Calu3 (cell line): ENCODE measurements at regions of chr2 and their contacts with region 1.

Region 1: DNA sequence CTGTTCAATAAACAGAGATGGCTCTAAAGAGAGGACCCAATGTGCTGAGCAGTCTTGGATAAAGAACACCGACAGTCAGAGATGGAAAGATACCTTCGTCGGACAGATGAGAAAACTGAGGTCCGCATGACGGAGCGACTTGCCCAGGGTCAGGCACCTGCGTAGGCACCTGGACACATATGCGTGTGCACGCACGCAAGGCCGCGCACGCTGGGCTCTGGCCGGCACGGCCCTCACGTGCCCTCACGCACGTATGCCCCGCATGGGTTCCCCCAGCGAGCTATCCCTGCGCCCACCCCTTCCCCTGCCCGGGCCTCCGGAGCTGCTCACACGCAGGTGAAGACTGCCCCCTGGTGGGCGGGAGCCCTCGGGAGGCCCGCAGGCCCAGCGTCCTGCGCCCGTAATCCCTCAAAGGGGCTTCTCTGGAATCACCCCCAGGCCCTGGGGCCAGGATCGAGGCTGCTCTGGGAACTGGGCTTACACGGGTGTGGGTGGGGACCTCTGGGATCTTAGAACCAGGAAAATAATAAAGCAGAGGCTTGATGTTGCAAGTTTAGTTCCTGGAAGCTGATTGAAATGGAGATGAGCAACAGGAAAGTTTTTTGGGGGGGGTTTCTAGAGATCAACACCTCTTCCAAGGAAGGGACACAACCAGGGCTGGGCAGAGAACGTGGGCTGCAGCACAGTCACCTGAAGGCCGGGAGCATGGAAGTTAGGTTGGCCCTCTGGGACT is 246.3 kb downstream of the TNS1 start:
- DNase-seq: peak; percentile 84
- H3K4me3 Mint-ChIP-seq: no peak overlapping the region
- H3K27ac Mint-ChIP-seq: no peak overlapping the region
- H3K4me1 Mint-ChIP-seq: no peaks in the 10 kb centered on the region
- H3K27me3 Mint-ChIP-seq: peaks cover 19% of the 10 kb centered on the region
- CTCF ChIP-seq: peak; percentile 93

Region 2: GRCh38 chr2:216687646-216688045 is 1068.9 kb before region 1 on chr2:
- CTCF ChIA-PET with region 1: no interaction called
- intact Hi-C with region 1: loop called (anchors 2 kb)
- DNase-seq: peak; percentile 35
- H3K4me3 Mint-ChIP-seq: no peak overlapping the region
- H3K27ac Mint-ChIP-seq: no peak overlapping the region
- H3K4me1 Mint-ChIP-seq: peaks cover 28% of the 10 kb centered on the region
- H3K27me3 Mint-ChIP-seq: no peaks in the 10 kb centered on the region
- CTCF ChIP-seq: peak; percentile 38

Region 3: GRCh38 chr2:217459680-217460405 is 296.7 kb before region 1 on chr2:
- CTCF ChIA-PET with region 1: no interaction called
- intact Hi-C with region 1: no loop called
- DNase-seq: no peak
- H3K4me3 Mint-ChIP-seq: no peak overlapping the region
- H3K27ac Mint-ChIP-seq: no peak overlapping the region
- H3K4me1 Mint-ChIP-seq: peaks cover 13% of the 10 kb centered on the region
- H3K27me3 Mint-ChIP-seq: no peaks in the 10 kb centered on the region
- CTCF ChIP-seq: no peak

Region 4: DNA sequence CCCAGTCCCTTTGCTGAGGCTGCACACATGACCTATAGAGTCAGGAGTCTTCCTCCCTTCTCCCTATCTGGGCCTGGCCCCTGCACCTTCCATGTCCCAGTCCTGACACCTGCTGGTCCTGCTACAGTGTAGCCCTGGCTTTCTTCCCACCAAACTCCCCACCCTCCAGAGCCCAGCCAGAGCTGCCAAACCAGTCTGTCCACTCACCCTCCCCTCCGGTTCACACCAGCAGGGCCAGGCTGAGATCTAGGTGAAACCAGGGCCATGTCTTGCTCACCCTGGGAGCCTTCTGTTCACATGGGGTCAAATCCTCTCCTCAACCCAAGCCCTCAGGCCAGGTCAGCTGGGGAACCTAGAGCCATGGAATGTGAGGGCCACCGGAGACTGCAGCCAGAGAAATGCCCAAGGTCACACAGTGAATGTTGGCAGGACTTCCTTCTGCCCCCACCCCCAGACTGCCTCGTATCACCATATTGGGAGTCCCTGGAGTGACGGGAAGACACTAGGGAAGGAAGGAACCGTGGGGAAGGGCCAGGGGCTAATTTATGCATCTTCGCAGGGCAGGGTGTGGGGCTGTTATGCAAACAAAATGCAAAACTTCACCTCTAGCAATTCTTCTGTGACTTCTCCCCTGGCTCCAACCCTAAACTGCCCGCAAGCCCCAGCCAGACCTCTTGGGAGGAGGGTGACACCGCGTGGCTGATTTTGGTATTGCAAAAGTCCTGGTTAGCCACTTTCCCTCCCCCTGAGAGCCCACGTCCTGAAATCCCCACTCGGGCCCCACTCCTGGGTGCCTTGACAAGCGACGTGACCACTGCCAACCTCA is 231.7 kb after region 1 on chr2:
- CTCF ChIA-PET with region 1: no interaction called
- intact Hi-C with region 1: no loop called
- DNase-seq: peak; percentile 94
- H3K4me3 Mint-ChIP-seq: peak overlapping the region; percentile 51
- H3K27ac Mint-ChIP-seq: peak overlapping the region; percentile 63
- H3K4me1 Mint-ChIP-seq: peaks cover 29% of the 10 kb centered on the region
- H3K27me3 Mint-ChIP-seq: peaks cover 19% of the 10 kb centered on the region
- CTCF ChIP-seq: peak; percentile 81